ENCODE measurements at regions of chr5 and their contacts with region 1.

Region 1: DNA sequence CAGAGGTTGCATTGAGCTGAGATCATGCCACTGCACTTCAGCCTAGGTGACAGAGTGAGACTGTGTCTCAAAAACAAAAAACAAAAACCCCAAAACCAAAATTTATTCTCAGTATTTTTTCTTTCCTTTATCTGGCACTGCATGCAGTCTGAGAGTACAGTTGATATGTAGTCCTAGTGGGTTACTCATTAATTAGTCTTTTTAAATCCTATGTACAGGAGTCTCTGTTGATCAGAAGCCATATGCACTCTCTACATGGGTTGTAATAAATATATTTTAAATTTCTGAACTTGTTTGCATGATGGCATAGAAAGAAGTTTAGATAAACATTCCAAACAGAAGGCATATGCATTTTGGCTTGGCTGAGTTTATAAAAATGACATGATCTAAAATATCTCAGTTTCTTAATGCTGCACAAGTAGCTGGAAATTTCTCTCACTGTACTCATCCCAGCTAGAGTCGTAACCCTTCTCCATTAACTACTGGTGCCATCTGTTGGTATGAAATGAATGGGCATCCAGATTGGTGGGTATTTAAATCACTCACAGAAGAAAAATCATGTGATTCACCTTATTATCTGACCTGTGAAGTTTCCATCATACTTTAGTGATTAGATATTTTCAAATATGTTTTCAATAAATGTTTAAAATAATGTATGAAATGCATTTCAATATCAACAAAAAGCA is 284.8 kb downstream of the CTNND2 start:
- DNase-seq: no peak
- H3K4me3 ChIP-seq: no peak overlapping the region
- H3K27ac ChIP-seq: peak overlapping the region in 11 of 59 donors; percentile 1 to 54 (median 27)
- H3K27me3 ChIP-seq: no peaks in the 10 kb centered on the region
- CTCF ChIP-seq: peak; percentile 32 to 89 (median 66)

Region 2: GRCh38 chr5:11719888-11720481 is 100.5 kb after region 1 on chr5:
- intact Hi-C with region 1: loop called in 1 of 2 experiments (anchors 10 kb)
- DNase-seq: peak in 9 of 10 donors; percentile 34 to 91 (median 59)
- H3K4me3 ChIP-seq: no peak overlapping the region
- H3K27ac ChIP-seq: peak overlapping the region in 1 of 59 donors; percentile 9
- H3K27me3 ChIP-seq: no peaks in the 10 kb centered on the region
- CTCF ChIP-seq: peak; percentile 38 to 81 (median 67)